ENCODE measurements at regions of chr1 and their contacts with region 1.

Region 1: DNA sequence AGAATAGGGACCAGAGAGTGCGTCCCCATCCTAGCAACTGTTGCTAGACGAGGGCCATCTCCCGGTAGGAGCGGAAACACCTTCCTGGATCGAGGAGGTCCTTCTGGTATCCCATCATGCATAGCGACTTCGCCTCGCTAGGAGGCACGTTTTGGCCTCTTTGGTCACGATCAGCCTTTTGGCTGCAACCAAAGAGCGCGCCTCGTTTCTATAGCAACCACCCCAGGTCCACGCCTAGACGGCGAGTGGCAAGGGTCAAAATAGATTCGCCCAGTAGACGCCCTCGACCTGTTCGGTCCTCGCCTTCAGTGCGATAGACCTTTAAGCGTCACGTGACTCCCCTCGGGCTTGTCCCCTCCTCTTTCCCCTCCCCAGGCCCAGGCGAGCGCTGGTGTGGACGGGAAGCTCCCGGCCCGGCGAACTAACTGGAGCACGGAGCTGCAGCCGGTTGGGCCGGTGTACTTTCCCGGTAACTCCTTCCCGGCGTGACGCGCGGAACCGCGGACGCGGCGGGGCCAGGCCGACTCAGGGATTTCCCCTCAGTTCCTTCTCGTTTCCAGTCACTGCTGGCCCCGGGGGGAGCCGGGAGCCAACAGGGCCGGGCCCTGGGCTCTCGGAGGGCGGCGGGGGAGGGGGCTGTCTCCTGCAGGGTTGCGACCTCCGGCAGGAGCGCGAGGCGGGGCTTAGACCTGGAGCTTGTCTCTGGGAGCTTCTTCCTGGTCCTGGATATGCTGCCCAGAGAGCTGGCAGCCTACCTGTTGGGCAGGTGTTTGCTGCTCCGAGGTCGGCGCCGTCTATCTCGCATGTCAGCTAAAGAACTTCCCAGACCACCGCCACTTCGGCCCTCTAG is at the start of gene DNAJC16:
- DNase-seq: peak; percentile 99
- H3K4me3 Mint-ChIP-seq: peak within 1 kb of the TSS; percentile 95
- H3K27ac Mint-ChIP-seq: peak within 1 kb of the TSS; percentile 99
- H3K4me1 Mint-ChIP-seq: peaks cover 51% of the 10 kb centered on the region
- H3K27me3 Mint-ChIP-seq: no peaks in the 10 kb centered on the region
- total RNA-seq, gene DNAJC16: 7.1 to 9.8 TPM

Region 2: DNA sequence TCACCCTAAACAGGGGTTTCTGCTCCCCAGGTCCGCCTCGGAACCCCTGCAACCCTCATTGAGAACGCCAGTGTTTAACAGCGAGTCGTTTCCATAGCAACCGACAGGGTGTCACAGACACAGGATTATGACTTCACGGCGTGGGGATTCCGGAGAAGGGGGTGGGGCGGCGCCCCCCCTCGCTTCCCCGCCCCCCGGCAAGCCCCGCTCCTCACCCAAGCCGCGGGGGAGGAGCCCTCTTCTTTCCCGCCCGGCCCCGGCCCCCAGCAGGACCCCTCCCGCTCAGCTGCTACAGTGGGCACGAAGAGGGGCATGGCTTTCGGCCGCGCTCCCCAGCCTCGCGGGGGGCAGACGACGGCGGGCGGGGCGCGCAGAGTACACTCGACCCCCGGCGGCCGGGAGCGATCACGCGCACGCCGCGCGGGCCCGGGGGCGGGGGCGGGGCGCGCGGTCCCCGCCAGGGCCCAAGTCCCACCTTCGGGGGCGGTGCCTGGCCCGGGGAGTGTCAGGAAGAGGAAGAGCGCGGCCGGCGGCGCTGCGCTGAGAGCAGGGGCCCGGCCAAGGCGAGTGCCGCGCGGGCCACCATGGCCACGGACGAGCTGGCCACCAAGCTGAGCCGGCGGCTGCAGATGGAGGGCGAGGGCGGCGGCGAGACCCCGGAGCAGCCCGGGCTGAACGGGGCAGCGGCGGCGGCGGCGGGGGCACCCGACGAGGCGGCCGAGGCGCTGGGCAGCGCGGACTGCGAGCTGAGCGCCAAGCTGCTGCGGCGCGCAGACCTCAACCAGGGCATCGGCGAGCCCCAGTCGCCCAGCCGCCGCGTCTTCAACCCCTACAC is 117.1 kb before region 1 on chr1 and contains the start of gene EFHD2:
- CTCF ChIA-PET with region 1: no interaction called
- intact Hi-C with region 1: loop called (anchors 2 kb)
- DNase-seq: peak; percentile 79
- H3K4me3 Mint-ChIP-seq: peak within 1 kb of the TSS; percentile 90
- H3K27ac Mint-ChIP-seq: peak within 1 kb of the TSS; percentile 81
- H3K4me1 Mint-ChIP-seq: peaks cover 24% of the 10 kb centered on the region
- H3K27me3 Mint-ChIP-seq: peaks cover 2% of the 10 kb centered on the region
- total RNA-seq, gene EFHD2: 35.0 to 36.0 TPM

Region 3: DNA sequence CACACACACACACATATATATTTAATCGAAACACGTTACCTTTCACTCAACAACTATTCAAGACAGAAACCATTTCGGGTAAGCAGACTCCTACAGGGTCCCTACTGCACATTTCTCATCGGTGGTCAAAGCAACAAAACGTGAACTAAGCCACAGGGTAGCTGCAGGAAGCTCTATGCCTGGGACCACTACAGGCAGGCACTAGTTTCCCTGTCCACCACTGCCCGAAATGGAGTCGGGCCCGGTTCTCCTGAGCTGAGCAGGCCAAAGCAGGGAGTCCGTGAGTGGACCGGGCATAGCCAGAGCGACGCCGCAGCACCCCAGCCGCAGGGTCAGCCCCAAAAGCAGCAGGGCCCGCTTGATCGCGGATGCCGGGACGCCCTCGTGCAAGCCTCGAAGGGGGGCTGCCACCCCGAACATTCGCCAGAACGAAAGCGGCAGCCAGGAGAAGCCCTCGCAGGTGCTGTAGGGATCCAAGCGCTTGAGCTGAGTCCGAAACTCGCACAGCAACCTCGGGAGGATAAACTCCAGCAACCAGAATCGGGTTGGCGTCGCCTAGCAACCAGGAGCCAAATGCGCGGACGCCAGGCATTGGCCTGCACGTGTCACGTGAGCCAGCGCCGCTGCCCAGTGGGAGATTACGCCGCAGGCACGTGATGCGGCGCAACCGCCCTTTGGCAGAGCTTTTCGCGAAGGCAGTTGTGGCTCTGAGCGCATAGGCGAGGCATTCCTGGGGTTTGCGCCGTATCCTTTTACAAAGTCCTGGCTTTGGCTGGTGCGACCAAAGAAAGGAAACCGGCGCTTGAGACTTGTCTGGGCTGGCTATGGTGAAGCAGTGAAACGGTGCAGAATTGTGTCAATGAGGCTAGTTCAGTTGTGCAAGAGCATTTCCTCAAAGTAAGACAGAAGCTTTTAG is 76.6 kb after region 1 on chr1:
- CTCF ChIA-PET with region 1: no interaction called
- intact Hi-C with region 1: loop called (anchors 1 kb)
- DNase-seq: peak; percentile 95
- H3K4me3 Mint-ChIP-seq: peak overlapping the region; percentile 73
- H3K27ac Mint-ChIP-seq: no peak overlapping the region
- H3K4me1 Mint-ChIP-seq: peaks cover 9% of the 10 kb centered on the region
- H3K27me3 Mint-ChIP-seq: no peaks in the 10 kb centered on the region

Region 4: GRCh38 chr1:15696956-15697521 is 170.3 kb after region 1 on chr1:
- CTCF ChIA-PET with region 1: no interaction called
- intact Hi-C with region 1: loop called (anchors 5 kb)
- DNase-seq: peak; percentile 79
- H3K4me3 Mint-ChIP-seq: peak overlapping the region; percentile 77
- H3K27ac Mint-ChIP-seq: peak overlapping the region; percentile 95
- H3K4me1 Mint-ChIP-seq: peaks cover 40% of the 10 kb centered on the region
- H3K27me3 Mint-ChIP-seq: no peaks in the 10 kb centered on the region

Region 5: DNA sequence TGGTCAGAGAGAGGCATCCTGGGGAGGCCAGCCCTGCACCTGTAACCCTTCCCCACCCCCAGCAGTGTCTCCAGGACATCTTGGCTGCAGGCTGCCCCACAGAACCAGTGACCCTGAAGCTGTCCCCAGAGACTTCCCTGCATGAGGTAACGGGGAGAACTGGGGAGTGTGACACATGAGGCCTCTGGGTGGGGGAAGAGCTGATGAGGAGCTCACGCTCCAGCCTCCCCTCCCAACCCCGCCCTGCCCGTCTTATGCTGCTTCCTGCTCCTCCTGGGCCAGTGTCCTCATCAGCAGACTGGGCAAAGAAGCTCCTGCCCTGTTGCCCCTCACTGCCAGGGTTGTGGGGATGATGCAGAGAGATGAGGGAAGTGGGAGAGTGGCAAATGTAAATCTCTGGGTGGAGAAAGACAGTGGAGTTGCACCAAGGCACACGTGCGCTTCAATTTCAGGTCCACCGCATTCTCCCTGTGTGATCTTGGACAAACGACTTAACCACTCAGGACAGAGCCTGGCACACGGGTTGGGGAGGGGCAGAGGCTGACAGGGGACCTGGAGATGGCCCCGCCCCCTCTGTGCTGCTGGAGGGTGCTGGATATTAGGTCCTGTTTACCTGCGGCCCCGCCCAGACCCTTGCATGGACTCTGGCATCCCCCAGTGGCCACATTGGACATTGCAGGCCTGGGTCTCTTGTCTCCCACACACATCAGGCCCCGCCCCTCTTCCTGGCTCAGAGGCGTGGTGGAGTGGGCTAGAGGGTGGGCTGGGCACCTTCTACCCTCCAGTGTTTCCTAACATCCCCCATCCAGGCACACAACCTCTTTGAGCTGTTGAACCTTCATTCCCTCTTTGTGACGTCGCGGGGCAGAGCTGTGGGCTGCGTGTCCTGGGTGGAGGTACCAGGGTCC is 529.2 kb after region 1 on chr1:
- CTCF ChIA-PET with region 1: no interaction called
- intact Hi-C with region 1: no loop called
- DNase-seq: peak; percentile 93
- H3K4me3 Mint-ChIP-seq: no peak overlapping the region
- H3K27ac Mint-ChIP-seq: no peak overlapping the region
- H3K4me1 Mint-ChIP-seq: peaks cover 2% of the 10 kb centered on the region
- H3K27me3 Mint-ChIP-seq: no peaks in the 10 kb centered on the region

Region 6: GRCh38 chr1:16167331-16168143 is 640.8 kb after region 1 on chr1:
- CTCF ChIA-PET with region 1: no interaction called
- intact Hi-C with region 1: loop called (anchors 10 kb)
- DNase-seq: peak; percentile 76
- H3K4me3 Mint-ChIP-seq: peak overlapping the region; percentile 60
- H3K27ac Mint-ChIP-seq: no peak overlapping the region
- H3K4me1 Mint-ChIP-seq: peaks cover 50% of the 10 kb centered on the region
- H3K27me3 Mint-ChIP-seq: no peaks in the 10 kb centered on the region

Region 7: DNA sequence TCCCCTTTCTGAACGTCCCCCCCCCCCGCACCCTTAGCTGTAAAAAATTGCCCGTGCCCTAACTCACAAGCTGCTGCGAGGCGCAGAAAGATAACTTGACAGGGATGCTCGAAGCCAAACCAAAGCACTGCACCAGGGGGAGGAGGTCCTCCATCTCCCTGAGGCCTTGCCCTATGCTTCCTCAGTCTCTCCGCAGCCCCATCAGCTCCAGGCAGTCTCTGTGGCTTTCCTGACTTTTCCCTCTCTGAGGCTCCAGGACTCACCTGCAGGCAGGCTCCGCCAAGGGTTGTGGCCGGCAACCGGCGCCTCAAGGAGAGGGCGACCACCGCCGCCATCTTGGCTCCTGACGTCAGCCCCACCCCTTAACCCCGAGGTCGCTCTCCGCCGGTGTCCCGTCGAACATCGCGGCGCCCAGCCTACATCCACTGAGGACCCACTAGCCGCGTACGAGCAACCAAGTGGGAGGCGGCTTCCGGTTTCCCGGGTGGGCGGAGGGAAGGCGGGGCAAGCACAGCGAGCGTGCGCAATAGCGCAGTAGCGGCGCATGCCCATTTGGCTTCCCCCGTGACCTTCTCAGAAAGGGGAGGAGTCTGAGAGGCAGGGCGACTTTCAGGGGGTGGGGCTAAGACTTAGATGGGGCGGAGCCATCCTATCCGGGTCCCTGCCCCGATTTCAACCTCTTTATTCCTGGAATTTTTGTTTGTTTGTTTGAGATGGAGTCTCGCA is 1527.1 kb after region 1 on chr1 and contains the start of gene SDHB:
- CTCF ChIA-PET with region 1: no interaction called
- intact Hi-C with region 1: loop called (anchors 10 kb)
- DNase-seq: peak; percentile 100
- H3K4me3 Mint-ChIP-seq: peak within 1 kb of the TSS; percentile 98
- H3K27ac Mint-ChIP-seq: peak within 1 kb of the TSS; percentile 91
- H3K4me1 Mint-ChIP-seq: peaks cover 22% of the 10 kb centered on the region
- H3K27me3 Mint-ChIP-seq: peaks cover 5% of the 10 kb centered on the region
- total RNA-seq, gene SDHB: 177 to 179 TPM